ENCODE measurements at regions of chr14 and their contacts with region 1.

Region 1: GRCh38 chr14:20682435-20683124 is 1.8 kb upstream of the RNASE4 start:
- DNase-seq: peak; percentile 67 to 91 (median 76)
- ATAC-seq: peak; percentile 68 to 73 (median 72)
- H3K4me3 ChIP-seq: peak overlapping the region; percentile 68 to 98
- H3K4me3 Mint-ChIP-seq: no peak overlapping the region
- H3K27ac ChIP-seq: peak overlapping the region; percentile 91
- H3K27ac Mint-ChIP-seq: no peak overlapping the region
- H3K4me1 ChIP-seq: peaks cover 17 to 46% of the 10 kb centered on the region in 2 experiments
- H3K4me1 Mint-ChIP-seq: peaks cover 5 to 28% (median 7%) of the 10 kb centered on the region in 3 donors
- H3K27me3 ChIP-seq: no peaks in the 10 kb centered on the region
- H3K27me3 Mint-ChIP-seq: no peaks in the 10 kb centered on the region

Region 2: DNA sequence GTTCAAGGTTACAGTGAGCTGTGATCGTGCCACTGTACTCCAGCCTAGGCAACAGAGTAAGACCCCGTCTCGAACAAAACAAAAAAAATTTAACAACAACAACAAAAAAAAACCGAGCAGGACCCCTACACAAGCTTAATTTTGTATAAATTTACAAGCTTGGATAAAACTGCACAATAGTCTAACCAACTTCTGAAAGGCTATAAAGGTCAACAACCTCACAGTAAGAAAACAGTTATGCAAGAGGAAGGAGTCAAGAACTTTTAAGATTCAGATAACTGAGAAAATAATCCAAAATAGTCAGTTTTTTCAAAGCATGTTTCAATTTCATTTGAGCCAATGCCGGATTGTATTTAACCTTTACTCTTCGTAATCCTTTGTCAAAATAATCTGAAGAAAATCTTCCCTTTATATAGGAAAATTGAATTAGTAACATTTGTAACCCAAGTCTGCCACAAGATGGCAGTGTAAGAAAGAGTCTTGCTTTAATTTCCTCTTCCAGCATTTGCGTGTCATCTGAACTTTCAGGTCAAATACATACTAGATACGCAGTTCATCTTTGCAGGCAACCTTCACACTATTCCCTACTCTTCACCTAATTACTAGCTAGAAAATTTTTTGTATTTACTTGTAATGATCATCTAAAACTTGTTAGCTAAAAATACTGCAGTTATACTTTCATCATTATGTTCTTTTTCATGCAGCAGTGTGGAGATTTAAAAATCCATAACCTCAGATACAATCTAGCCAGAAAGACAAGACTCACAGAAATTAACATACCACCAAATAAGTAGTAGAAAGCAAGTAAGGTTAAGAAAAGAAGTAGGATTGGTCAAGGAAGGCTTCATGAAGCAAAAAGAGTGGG is 355.3 kb before region 1 on chr14:
- CTCF ChIA-PET with region 1: interaction called in 1 of 2 experiments, 12 read pairs
- POLR2A ChIA-PET with region 1: interaction called in 1 of 2 experiments, 4 read pairs
- DNase-seq: peak in 8 of 35 experiments; percentile 9 to 84 (median 31)
- ATAC-seq: peak; percentile 46 to 72 (median 60)
- H3K4me3 ChIP-seq: no peak overlapping the region
- H3K4me3 Mint-ChIP-seq: peak overlapping the region in 1 of 3 donors; percentile 13
- H3K27ac ChIP-seq: no peak overlapping the region
- H3K27ac Mint-ChIP-seq: peak overlapping the region; percentile 70 to 79
- H3K4me1 ChIP-seq: peaks cover 0 to under 1% of the 10 kb centered on the region in 2 experiments
- H3K4me1 Mint-ChIP-seq: peaks cover 19 to 29% (median 24%) of the 10 kb centered on the region in 3 donors
- H3K27me3 ChIP-seq: no peaks in the 10 kb centered on the region
- H3K27me3 Mint-ChIP-seq: no peaks in the 10 kb centered on the region

Region 3: GRCh38 chr14:20356422-20356821 is 326.2 kb before region 1 on chr14:
- CTCF ChIA-PET with region 1: no interaction called
- POLR2A ChIA-PET with region 1: no interaction called
- DNase-seq: no peak
- ATAC-seq: no peak
- H3K4me3 ChIP-seq: no peak overlapping the region
- H3K4me3 Mint-ChIP-seq: no peak overlapping the region
- H3K27ac ChIP-seq: no peak overlapping the region
- H3K27ac Mint-ChIP-seq: peak overlapping the region in 1 of 2 donors; percentile 7
- H3K4me1 ChIP-seq: no peaks in the 10 kb centered on the region
- H3K4me1 Mint-ChIP-seq: no peaks in the 10 kb centered on the region
- H3K27me3 ChIP-seq: no peaks in the 10 kb centered on the region
- H3K27me3 Mint-ChIP-seq: no peaks in the 10 kb centered on the region

Region 4: GRCh38 chr14:20662968-20663732 is 19.4 kb before region 1 on chr14:
- CTCF ChIA-PET with region 1: interaction called, 10 to 35 read pairs
- POLR2A ChIA-PET with region 1: no interaction called
- DNase-seq: peak; percentile 44 to 85 (median 69)
- ATAC-seq: peak; percentile 83 to 92 (median 89)
- H3K4me3 ChIP-seq: peak overlapping the region; percentile 11 to 50
- H3K4me3 Mint-ChIP-seq: peak overlapping the region; percentile 66 to 84 (median 71)
- H3K27ac ChIP-seq: no peak overlapping the region
- H3K27ac Mint-ChIP-seq: peak overlapping the region in 1 of 2 donors; percentile 33
- H3K4me1 ChIP-seq: peaks cover 4 to 22% of the 10 kb centered on the region in 2 experiments
- H3K4me1 Mint-ChIP-seq: peaks cover 28 to 32% (median 32%) of the 10 kb centered on the region in 3 donors
- H3K27me3 ChIP-seq: peaks cover 0 to 33% of the 10 kb centered on the region in 2 experiments
- H3K27me3 Mint-ChIP-seq: peaks cover 12 to 25% of the 10 kb centered on the region in 2 donors

Region 5: GRCh38 chr14:20697273-20698017 is 14.9 kb after region 1 on chr14:
- CTCF ChIA-PET with region 1: interaction called, 5 to 10 read pairs
- POLR2A ChIA-PET with region 1: no interaction called
- DNase-seq: peak in 34 of 35 experiments; percentile 13 to 79 (median 51)
- ATAC-seq: peak; percentile 57 to 76 (median 73)
- H3K4me3 ChIP-seq: no peak overlapping the region
- H3K4me3 Mint-ChIP-seq: no peak overlapping the region
- H3K27ac ChIP-seq: no peak overlapping the region
- H3K27ac Mint-ChIP-seq: no peak overlapping the region
- H3K4me1 ChIP-seq: no peaks in the 10 kb centered on the region
- H3K4me1 Mint-ChIP-seq: peaks cover 0 to 2% (median 0%) of the 10 kb centered on the region in 3 donors
- H3K27me3 ChIP-seq: peaks cover 0 to 7% of the 10 kb centered on the region in 2 experiments
- H3K27me3 Mint-ChIP-seq: peaks cover 0 to 2% of the 10 kb centered on the region in 2 donors

Measured in T-cell (primary cell).